Thyroid gland (tissue), 4 donors: ENCODE measurements at regions of chr9 and their contacts with region 1.

Region 1: GRCh38 chr9:83355024-83355444 is 183.2 kb downstream of the FRMD3 start:
- DNase-seq: no peak
- H3K4me3 ChIP-seq: no peak overlapping the region
- H3K27ac ChIP-seq: peak overlapping the region in 1 of 3 donors; percentile 43
- H3K4me1 ChIP-seq: peaks cover 12 to 20% of the 10 kb centered on the region in 2 donors
- H3K27me3 ChIP-seq: no peaks in the 10 kb centered on the region
- CTCF ChIP-seq: no peak
- POLR2A ChIP-seq: no peak

Region 2: DNA sequence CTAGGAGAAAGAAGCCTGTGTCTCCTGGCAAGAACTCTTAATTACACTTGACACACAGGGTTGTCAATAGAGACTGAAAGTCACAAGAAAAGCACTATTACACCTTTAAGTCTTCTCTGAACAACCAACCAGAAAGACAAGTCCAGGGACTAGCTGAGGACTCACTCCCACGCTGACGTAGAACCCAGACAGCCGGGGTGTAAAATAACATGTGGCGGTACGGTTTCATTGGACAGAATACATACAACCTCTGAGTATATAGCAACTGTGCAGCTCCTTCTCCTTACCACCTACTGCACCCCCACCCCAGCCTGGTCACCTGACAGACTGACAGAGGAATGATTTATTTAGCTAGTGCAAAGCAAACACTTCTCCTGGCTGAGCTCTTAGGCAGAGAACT is 188.7 kb before region 1 on chr9:
- intact Hi-C with region 1: no loop called
- DNase-seq: peak; percentile 86
- H3K4me3 ChIP-seq: no peak overlapping the region
- H3K27ac ChIP-seq: peak overlapping the region; percentile 72 to 85 (median 81)
- H3K4me1 ChIP-seq: peaks cover 10 to 21% of the 10 kb centered on the region in 2 donors
- H3K27me3 ChIP-seq: no peaks in the 10 kb centered on the region
- CTCF ChIP-seq: no peak
- POLR2A ChIP-seq: peak in 1 of 2 donors; percentile 49

Region 3: DNA sequence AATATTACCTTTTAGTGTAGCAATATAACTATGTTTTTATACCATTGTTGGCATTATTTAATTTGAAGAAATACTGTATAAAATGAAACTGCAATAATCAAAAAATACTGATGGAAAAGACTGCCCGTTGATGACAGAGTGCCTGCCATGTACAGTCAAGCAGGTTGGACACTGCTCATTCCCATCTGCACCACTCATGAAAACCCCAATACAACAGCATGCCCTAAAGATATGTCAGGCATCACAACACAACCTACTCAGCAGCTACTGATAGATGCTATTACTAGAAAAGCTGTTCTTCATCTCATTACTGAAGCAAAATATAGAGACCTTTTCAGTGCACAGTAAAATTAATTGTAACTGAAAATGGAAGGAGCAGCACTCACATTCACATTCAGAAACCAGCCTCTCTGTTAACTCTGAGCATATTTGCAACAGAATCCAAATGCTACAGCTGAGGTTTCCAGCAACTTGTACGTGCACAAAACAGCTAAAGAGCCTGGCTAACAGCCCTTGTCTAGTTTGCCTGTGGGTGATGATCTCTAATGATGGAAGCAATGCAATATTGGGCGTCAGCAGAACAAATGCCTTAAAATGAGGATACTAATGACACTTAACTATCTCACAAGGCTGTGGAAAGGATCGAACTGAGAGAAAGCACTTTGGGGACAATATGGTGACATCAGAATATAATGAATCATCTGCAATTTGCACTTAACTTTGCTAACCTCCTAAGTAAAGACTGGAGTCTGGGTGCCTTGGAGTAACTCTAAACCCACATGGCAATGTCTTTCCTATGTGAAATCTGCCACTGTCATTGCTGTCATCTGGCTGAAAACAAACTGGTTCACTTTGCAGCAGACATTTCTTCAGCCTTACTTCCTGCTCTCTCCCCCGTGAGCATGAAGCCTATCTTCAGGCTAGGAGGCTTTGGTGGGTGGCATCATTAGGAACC is 96.8 kb before region 1 on chr9:
- intact Hi-C with region 1: no loop called
- DNase-seq: no peak
- H3K4me3 ChIP-seq: no peak overlapping the region
- H3K27ac ChIP-seq: no peak overlapping the region
- H3K4me1 ChIP-seq: no peaks in the 10 kb centered on the region
- H3K27me3 ChIP-seq: no peaks in the 10 kb centered on the region
- CTCF ChIP-seq: no peak
- POLR2A ChIP-seq: no peak

Region 4: DNA sequence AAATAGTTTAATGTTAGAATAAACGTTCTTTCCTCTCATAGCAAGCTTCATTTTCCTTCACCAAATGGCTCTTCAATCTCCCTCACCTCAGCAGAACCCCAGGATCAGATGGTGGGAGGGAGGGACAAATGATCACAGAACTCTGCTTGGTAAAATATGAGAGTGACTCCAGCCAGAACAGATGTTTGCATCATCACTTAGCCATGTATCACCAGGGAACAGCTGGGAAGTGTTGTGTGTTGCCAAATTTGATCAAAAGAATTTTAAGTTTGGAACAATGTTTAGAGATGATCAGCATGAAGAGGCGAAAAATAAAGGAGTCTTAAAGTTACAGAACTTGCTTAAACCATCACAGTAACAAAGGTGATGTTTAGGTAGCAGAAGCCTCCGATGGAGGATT is 67.5 kb after region 1 on chr9:
- intact Hi-C with region 1: loop called (anchors 10 kb)
- DNase-seq: no peak
- H3K4me3 ChIP-seq: no peak overlapping the region
- H3K27ac ChIP-seq: no peak overlapping the region
- H3K4me1 ChIP-seq: peaks cover 7 to 14% of the 10 kb centered on the region in 2 donors
- H3K27me3 ChIP-seq: no peaks in the 10 kb centered on the region
- CTCF ChIP-seq: no peak
- POLR2A ChIP-seq: no peak